ENCODE measurements at regions of chr2 and their contacts with region 1.

Region 1: GRCh38 chr2:29583088-29583487 is 338.3 kb downstream of the ALK start:
- DNase-seq: no peak
- H3K4me3 ChIP-seq: no peak overlapping the region; a peak in 1 of 4 replicates
- H3K27ac ChIP-seq: peak overlapping the region in 1 of 2 experiments; percentile 100; a peak in 2 of 4 replicates
- H3K4me1 ChIP-seq: peaks cover 9 to 80% of the 10 kb centered on the region in 2 experiments; a peak in 2 of 4 replicates
- H3K27me3 ChIP-seq: peaks cover 16% of the 10 kb centered on the region; the same call in 1 of the 2 replicates
- CTCF ChIP-seq: no peak
- EP300 ChIP-seq: no peak
- RAD21 ChIP-seq: no peak

Region 2: DNA sequence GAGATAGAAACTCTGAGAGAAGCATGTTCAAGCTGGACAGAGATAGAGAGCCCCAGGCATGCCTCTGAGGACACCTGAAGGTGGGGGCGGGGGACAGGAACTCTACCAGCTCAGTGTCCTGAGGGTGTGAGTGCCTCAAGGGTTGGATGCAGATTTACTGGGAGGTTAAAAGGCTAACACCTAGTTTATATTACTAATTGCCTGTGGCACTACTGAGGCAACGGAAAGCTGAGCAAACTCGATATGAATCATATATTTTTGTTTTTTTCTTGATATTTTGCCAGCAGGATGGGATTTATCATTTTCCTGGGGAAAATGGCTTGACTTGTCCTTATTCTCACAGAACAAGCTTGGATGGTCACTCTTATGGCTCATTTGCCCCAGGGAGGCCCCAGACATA is 18.8 kb after region 1 on chr2:
- CTCF ChIA-PET with region 1: interaction called, 12 read pairs
- POLR2A ChIA-PET with region 1: interaction called, 9 read pairs
- DNase-seq: no peak
- H3K4me3 ChIP-seq: no peak overlapping the region
- H3K27ac ChIP-seq: peak overlapping the region in 1 of 2 experiments; percentile 11; a peak in 1 of 4 replicates
- H3K4me1 ChIP-seq: peaks cover 0 to 21% of the 10 kb centered on the region in 2 experiments; a peak in 2 of 4 replicates
- H3K27me3 ChIP-seq: no peaks in the 10 kb centered on the region
- CTCF ChIP-seq: no peak
- EP300 ChIP-seq: no peak
- RAD21 ChIP-seq: no peak

Region 3: DNA sequence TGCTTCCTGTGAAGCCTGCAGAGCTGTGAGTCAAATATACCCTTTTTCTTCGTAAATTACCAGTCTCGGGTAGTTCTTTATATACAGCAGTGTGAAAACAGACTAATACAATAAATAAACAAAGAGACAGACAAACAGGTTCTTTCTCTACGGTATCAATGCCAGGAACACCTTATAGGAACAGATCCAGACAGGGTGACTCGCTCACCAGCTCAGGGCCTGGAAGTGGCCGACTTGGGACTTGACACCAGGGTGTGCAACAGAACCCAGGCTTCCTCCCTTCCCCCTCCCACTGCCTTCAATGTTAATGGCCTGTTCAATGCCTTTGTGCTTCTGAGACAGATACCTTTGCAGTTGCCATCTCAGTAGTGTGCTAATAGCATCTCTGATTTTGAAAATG is 28.8 kb after region 1 on chr2:
- CTCF ChIA-PET with region 1: interaction called, 10 read pairs
- POLR2A ChIA-PET with region 1: interaction called, 49 read pairs
- DNase-seq: no peak
- H3K4me3 ChIP-seq: no peak overlapping the region
- H3K27ac ChIP-seq: peak overlapping the region in 1 of 2 experiments; percentile 99; a peak in 2 of 4 replicates
- H3K4me1 ChIP-seq: peaks cover 0 to 80% of the 10 kb centered on the region in 2 experiments; a peak in 2 of 4 replicates
- H3K27me3 ChIP-seq: no peaks in the 10 kb centered on the region
- CTCF ChIP-seq: no peak
- EP300 ChIP-seq: no peak
- RAD21 ChIP-seq: no peak

Region 4: DNA sequence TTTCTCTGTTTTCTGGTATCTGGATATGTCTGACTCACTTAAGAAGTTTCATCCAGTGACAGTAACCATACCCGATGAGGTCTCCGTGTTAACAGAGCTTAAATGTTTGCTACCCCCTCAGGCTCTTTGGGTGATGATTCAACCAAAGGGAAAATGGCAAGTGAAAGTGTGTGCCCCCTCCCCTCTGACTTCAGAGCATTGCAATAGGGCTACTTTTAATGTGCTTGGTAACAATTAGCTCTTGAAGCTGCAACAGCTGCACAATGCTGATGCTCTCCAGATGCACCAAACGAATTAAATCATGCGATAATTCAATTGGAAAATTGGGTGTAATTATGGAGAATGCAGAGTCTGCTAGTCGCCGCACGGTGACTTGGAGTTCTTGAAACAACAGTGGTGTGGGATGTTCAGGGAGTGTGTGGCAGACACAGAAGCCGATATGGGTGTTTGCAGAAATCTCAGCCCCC is 67.6 kb after region 1 on chr2:
- CTCF ChIA-PET with region 1: interaction called, 7 read pairs
- POLR2A ChIA-PET with region 1: interaction called, 19 read pairs
- DNase-seq: peak; percentile 74
- H3K4me3 ChIP-seq: no peak overlapping the region
- H3K27ac ChIP-seq: peak overlapping the region in 1 of 2 experiments; percentile 99; a peak in 2 of 4 replicates
- H3K4me1 ChIP-seq: peaks cover 0 to 41% of the 10 kb centered on the region in 2 experiments; a peak in 2 of 4 replicates
- H3K27me3 ChIP-seq: no peaks in the 10 kb centered on the region
- CTCF ChIP-seq: no peak
- EP300 ChIP-seq: peak; percentile 59 to 100; a peak in 2 of 4 replicates
- RAD21 ChIP-seq: peak; percentile 49

Region 5: GRCh38 chr2:29664578-29664977 is 81.5 kb after region 1 on chr2:
- CTCF ChIA-PET with region 1: no interaction called
- POLR2A ChIA-PET with region 1: no interaction called
- DNase-seq: no peak
- H3K4me3 ChIP-seq: no peak overlapping the region
- H3K27ac ChIP-seq: no peak overlapping the region
- H3K4me1 ChIP-seq: peaks cover 6 to 9% of the 10 kb centered on the region in 2 experiments; a peak in 2 of 4 replicates
- H3K27me3 ChIP-seq: no peaks in the 10 kb centered on the region
- CTCF ChIP-seq: no peak
- EP300 ChIP-seq: no peak
- RAD21 ChIP-seq: no peak

Measured in SK-N-SH (cell line).